ENCODE measurements at regions of chr2 and their contacts with region 1.

Region 1: GRCh38 chr2:119826370-119826961 is 66.7 kb downstream of the PTPN4 start:
- DNase-seq: no peak
- ATAC-seq: no peak
- H3K4me3 ChIP-seq: no peak overlapping the region
- H3K27ac ChIP-seq: peak overlapping the region in 1 of 4 donors; percentile 26
- H3K4me1 ChIP-seq: peaks cover 13 to 32% of the 10 kb centered on the region in 2 donors
- H3K27me3 ChIP-seq: no peaks in the 10 kb centered on the region
- CTCF ChIP-seq: peak in 3 of 5 experiments; percentile 29 to 40 (median 37)
- POLR2A ChIP-seq: no peak

Region 2: DNA sequence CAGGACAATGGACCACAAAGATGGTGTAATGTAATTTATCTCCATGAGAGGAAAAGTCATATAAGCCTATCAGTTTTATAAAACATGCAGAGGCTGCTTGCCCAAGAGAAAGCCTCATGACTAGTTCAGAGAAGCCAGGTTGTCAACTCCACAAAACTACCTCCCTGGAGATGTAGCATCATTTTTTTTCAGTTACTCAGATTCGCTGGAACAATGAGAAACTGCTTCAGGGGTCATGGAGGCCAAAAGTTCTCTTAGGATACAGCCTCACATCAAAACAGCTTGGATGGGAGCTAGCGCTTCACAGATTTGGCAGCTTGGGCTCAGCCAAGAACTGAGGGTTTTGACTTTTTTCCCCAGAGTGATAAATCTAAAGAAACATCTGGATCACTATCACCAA is 1474.7 kb before region 1 on chr2:
- in situ Hi-C with region 1: no loop called
- intact Hi-C with region 1: no loop called
- DNase-seq: no peak
- ATAC-seq: no peak
- H3K4me3 ChIP-seq: no peak overlapping the region
- H3K27ac ChIP-seq: no peak overlapping the region
- H3K4me1 ChIP-seq: no peaks in the 10 kb centered on the region
- H3K27me3 ChIP-seq: no peaks in the 10 kb centered on the region
- CTCF ChIP-seq: no peak
- POLR2A ChIP-seq: no peak

Region 3: DNA sequence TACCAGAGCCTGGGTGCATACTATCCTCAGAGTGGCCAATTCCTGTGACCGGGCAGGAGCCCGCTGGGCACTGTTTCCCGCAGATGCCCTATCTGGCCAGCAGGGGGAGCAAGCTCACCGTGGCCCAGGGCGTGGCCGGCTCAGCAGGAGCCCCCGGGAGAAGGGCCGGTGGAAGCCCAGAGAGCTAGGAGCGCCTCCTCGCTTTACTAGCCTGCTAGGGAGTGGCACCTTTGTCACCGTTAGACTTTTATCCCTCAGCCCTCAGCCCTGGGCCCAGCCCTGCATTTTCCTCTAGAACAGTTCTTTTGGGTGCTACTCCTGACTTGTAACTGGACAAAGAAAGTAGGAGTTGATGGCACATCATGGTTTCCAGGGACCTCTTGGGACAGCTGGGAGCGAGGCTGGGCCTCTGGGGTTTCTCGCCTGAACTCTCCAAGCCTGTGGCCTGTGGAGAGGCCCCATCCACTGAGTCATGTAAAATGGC is 123.5 kb before region 1 on chr2:
- in situ Hi-C with region 1: loop called in 1 of 4 experiments (anchors 5 kb)
- intact Hi-C with region 1: loop called (anchors 1 kb)
- DNase-seq: peak; percentile 48 to 57
- ATAC-seq: peak; percentile 72 to 92
- H3K4me3 ChIP-seq: no peak overlapping the region
- H3K27ac ChIP-seq: no peak overlapping the region
- H3K4me1 ChIP-seq: no peaks in the 10 kb centered on the region
- H3K27me3 ChIP-seq: no peaks in the 10 kb centered on the region
- CTCF ChIP-seq: peak; percentile 77 to 99 (median 94)
- POLR2A ChIP-seq: no peak

Region 4: DNA sequence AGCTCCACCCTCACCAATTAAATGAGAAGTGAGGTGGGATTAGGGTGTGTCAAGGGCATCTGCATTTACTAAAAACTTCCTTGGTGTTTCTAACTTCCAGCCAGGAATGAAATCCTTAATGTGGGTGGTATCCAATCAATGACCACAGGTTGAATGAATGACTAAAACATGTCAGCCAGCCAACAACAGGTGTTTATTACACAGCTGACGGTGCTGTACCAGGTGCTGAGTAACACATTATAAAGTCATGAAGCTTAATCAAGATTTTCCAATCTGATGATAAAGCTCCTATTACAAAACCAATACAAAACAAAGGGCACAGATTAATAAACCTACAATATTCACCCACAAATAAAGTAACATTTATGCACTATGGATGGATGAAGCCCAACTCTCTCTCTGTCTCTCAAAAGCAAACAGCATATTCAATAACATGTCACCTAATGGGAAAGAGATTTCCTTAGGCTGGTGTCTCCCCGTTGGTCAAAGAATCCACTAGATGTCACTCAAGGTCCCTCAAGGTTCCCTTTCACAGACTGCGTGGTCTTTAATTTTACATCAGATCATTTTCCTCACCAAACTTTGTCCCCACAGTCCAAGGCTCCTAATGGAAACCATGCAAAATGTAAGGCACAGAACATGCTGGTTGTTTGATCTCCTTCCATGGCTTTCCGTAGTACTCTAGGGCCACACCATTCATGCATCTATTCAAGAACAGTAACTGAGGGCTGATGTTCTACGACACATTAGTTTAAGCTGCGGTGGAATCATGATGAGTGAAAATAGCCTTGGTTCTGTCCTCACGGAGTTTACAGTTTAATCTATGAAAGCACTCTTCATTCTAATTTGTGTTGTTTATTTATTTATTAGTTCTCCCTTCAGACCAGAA is 73.2 kb before region 1 on chr2:
- in situ Hi-C with region 1: loop called in 3 of 4 experiments (anchors 5 to 10 kb)
- intact Hi-C with region 1: loop called (anchors 1 kb)
- DNase-seq: no peak
- ATAC-seq: peak; percentile 42 to 46
- H3K4me3 ChIP-seq: no peak overlapping the region
- H3K27ac ChIP-seq: peak overlapping the region in 2 of 4 donors; percentile 6 to 8
- H3K4me1 ChIP-seq: peaks cover 0 to 21% of the 10 kb centered on the region in 2 donors
- H3K27me3 ChIP-seq: no peaks in the 10 kb centered on the region
- CTCF ChIP-seq: peak in 4 of 5 experiments; percentile 55 to 82 (median 68)
- POLR2A ChIP-seq: no peak